A673 (cell line): ENCODE measurements at regions of chr18 and their contacts with region 1.

Region 1: GRCh38 chr18:23032030-23032582 is 99.0 kb downstream of the RBBP8 start:
- DNase-seq: peak; percentile 12
- H3K4me3 ChIP-seq: no peak overlapping the region
- H3K27ac ChIP-seq: no peak overlapping the region
- H3K4me1 ChIP-seq: peaks cover 3% of the 10 kb centered on the region
- H3K27me3 ChIP-seq: no peaks in the 10 kb centered on the region
- CTCF ChIP-seq: no peak

Region 2: DNA sequence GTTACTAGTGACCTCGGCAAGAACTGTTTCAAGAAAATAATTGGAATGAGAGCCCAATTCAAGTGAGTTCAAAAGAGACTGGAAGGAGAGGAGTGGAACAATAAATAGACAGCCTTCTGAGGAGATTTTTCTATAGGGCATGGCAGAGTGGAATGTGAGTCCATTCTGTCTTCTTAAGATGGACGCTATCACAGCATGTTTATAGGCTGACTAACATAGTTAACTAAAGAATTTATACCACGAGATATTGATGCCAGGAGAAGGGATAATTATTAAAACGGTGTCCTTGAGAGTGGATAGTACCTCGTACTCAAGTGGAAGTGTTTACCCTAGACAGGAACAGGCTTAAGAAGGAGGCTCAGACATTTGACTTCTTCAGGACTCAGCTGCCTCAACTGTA is 242.5 kb before region 1 on chr18:
- CTCF ChIA-PET with region 1: interaction called, 21 read pairs
- POLR2A ChIA-PET with region 1: no interaction called
- intact Hi-C with region 1: no loop called
- DNase-seq: no peak
- H3K4me3 ChIP-seq: no peak overlapping the region
- H3K27ac ChIP-seq: no peak overlapping the region
- H3K4me1 ChIP-seq: no peaks in the 10 kb centered on the region
- H3K27me3 ChIP-seq: peaks cover 27% of the 10 kb centered on the region
- CTCF ChIP-seq: no peak

Region 3: GRCh38 chr18:23377669-23378301 is 345.7 kb after region 1 on chr18:
- CTCF ChIA-PET with region 1: interaction called, 11 read pairs
- POLR2A ChIA-PET with region 1: no interaction called
- intact Hi-C with region 1: no loop called
- DNase-seq: peak; percentile 48
- H3K4me3 ChIP-seq: no peak overlapping the region
- H3K27ac ChIP-seq: no peak overlapping the region
- H3K4me1 ChIP-seq: peaks cover 7% of the 10 kb centered on the region
- H3K27me3 ChIP-seq: no peaks in the 10 kb centered on the region
- CTCF ChIP-seq: no peak

Region 4: GRCh38 chr18:23412351-23412964 is 380.4 kb after region 1 on chr18:
- CTCF ChIA-PET with region 1: interaction called, 13 read pairs
- POLR2A ChIA-PET with region 1: no interaction called
- intact Hi-C with region 1: loop called (anchors 2 kb)
- DNase-seq: no peak
- H3K4me3 ChIP-seq: no peak overlapping the region
- H3K27ac ChIP-seq: no peak overlapping the region
- H3K4me1 ChIP-seq: no peaks in the 10 kb centered on the region
- H3K27me3 ChIP-seq: no peaks in the 10 kb centered on the region
- CTCF ChIP-seq: no peak